Activated T-helper 1 cell treated with anti-CD3 and anti-CD28 coated beads, Interleukin-12 subunit alpha, Interleukin-12 subunit beta, Interleukin-2, Interleukin-4 antibody, amounts not matched to agents 30 ng/mL and 10 ng/mL and 1 ng/mL, durations not matched to agents 14 hours and 24 hours and 36 hours (primary cell): ENCODE measurements at regions of chr12 and their contacts with region 1.

Region 1: GRCh38 chr12:96194971-96195844 is 1.0 kb downstream of the ELK3 start:
- DNase-seq: peak; percentile 68
- H3K4me3 Mint-ChIP-seq: peak overlapping the region; percentile 96
- H3K27ac Mint-ChIP-seq: peak overlapping the region; percentile 98
- H3K4me1 Mint-ChIP-seq: peaks cover 49% of the 10 kb centered on the region
- H3K27me3 Mint-ChIP-seq: no peaks in the 10 kb centered on the region

Region 2: GRCh38 chr12:94644141-94644979 is 1550.8 kb before region 1 on chr12:
- intact Hi-C with region 1: loop called (anchors 5 kb)
- DNase-seq: no peak
- H3K4me3 Mint-ChIP-seq: peak overlapping the region; percentile 63
- H3K27ac Mint-ChIP-seq: peak overlapping the region; percentile 7
- H3K4me1 Mint-ChIP-seq: peaks cover 46% of the 10 kb centered on the region
- H3K27me3 Mint-ChIP-seq: peaks cover 68% of the 10 kb centered on the region

Region 3: DNA sequence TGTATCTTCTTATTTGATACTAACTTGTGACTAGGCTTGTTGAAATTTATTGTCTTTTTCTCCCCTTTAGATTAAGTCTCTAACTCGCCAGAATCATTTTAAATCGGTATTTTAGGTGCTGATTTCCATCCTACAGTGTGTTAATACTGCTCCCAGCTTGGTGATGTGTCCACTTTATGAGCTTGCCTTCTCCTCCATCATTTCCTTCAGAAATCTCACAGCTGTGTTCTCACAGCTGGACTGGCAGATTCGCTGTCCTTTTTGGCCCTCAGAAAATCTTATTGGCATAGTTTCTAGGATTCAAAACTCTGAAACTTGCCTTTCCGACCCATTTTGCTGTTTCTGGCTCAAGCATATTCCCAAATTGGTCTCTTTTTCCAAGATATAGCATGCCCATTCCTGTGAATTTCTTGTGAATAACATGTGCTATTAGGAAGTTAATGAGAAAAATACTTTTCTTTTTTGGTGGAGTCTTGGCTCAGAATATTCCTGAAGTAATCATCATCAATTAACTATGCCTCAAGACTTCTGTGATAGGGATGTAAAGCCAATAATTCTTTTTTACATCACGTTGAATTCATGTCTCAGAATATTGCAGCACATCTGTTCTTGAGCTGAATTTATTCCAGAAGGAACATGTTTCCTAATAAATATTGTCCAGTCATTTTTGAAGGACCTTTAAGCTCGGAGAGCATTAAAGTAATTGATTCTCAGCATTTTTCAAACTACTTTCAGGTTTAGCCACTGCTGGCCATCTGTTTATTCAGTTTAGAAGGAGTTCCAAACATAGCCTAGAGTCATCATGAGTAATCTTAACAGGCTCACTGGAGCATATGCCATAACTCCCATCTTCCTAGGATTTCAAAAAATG is 593.9 kb before region 1 on chr12:
- intact Hi-C with region 1: no loop called
- DNase-seq: no peak
- H3K4me3 Mint-ChIP-seq: no peak overlapping the region
- H3K27ac Mint-ChIP-seq: no peak overlapping the region
- H3K4me1 Mint-ChIP-seq: no peaks in the 10 kb centered on the region
- H3K27me3 Mint-ChIP-seq: peaks cover 2% of the 10 kb centered on the region

Region 4: GRCh38 chr12:96061864-96062453 is 133.2 kb before region 1 on chr12:
- intact Hi-C with region 1: loop called (anchors 1 kb)
- DNase-seq: peak; percentile 58
- H3K4me3 Mint-ChIP-seq: no peak overlapping the region
- H3K27ac Mint-ChIP-seq: no peak overlapping the region
- H3K4me1 Mint-ChIP-seq: peaks cover 27% of the 10 kb centered on the region
- H3K27me3 Mint-ChIP-seq: no peaks in the 10 kb centered on the region